Activated CD8-positive, alpha-beta T cell treated with anti-CD3 and anti-CD28 coated beads, Interleukin-2, amount 10 ng/mL, durations not matched to agents 7 days and 5 days (primary cell): ENCODE measurements at regions of chr2 and their contacts with region 1.

Region 1: GRCh38 chr2:239322416-239323086 is 78.3 kb downstream of the HDAC4 start:
- DNase-seq: peak; percentile 42
- ATAC-seq: peak; percentile 9
- H3K4me3 Mint-ChIP-seq: peak overlapping the region; percentile 27
- H3K27ac Mint-ChIP-seq: peak overlapping the region; percentile 98
- H3K4me1 Mint-ChIP-seq: peaks cover 82% of the 10 kb centered on the region
- H3K27me3 Mint-ChIP-seq: no peaks in the 10 kb centered on the region

Region 2: GRCh38 chr2:239181907-239182581 is 140.5 kb before region 1 on chr2:
- CTCF ChIA-PET with region 1: no interaction called
- POLR2A ChIA-PET with region 1: no interaction called
- DNase-seq: no peak
- ATAC-seq: no peak
- H3K4me3 Mint-ChIP-seq: no peak overlapping the region
- H3K27ac Mint-ChIP-seq: no peak overlapping the region
- H3K4me1 Mint-ChIP-seq: no peaks in the 10 kb centered on the region
- H3K27me3 Mint-ChIP-seq: no peaks in the 10 kb centered on the region

Region 3: GRCh38 chr2:239288951-239289511 is 33.5 kb before region 1 on chr2:
- CTCF ChIA-PET with region 1: interaction called, 10 read pairs
- POLR2A ChIA-PET with region 1: interaction called, 12 read pairs
- DNase-seq: peak; percentile 69
- ATAC-seq: peak; percentile 73
- H3K4me3 Mint-ChIP-seq: peak overlapping the region; percentile 77
- H3K27ac Mint-ChIP-seq: peak overlapping the region; percentile 93
- H3K4me1 Mint-ChIP-seq: peaks cover 76% of the 10 kb centered on the region
- H3K27me3 Mint-ChIP-seq: no peaks in the 10 kb centered on the region

Region 4: DNA sequence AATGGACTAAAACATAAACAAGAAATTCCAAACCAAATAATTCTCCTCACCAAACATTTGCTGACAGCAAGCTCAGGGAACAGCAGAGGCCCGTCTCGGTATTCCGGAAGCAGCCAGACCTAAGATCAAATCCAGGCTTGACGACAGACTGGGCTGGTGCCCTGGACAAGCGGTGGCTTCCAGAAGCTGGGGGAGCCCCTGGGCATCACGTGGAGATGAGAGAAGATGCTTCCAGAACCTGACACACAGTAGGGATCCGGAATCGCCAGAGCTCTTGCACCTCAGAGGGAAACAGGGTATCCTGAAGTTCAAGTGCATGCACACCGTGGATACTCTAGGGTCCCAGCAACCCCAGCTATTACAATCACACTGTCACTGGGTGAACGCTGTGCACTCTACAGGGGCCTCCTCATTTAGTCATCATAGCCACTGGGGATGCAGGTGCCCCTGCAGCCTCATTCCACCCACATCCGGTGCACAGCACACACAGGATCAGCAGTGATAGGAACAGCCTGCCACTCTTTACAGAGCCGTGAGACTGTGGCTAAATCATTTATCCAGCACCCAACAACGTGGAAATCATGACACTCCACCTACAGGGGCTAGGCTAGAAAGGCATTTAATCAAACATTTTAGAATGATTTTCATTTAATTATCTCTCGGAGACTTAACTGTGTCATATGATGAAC is 24.3 kb before region 1 on chr2:
- CTCF ChIA-PET with region 1: interaction called, 10 read pairs
- POLR2A ChIA-PET with region 1: interaction called, 13 read pairs
- DNase-seq: peak; percentile 87
- ATAC-seq: peak; percentile 91
- H3K4me3 Mint-ChIP-seq: peak overlapping the region; percentile 79
- H3K27ac Mint-ChIP-seq: peak overlapping the region; percentile 90
- H3K4me1 Mint-ChIP-seq: peaks cover 73% of the 10 kb centered on the region
- H3K27me3 Mint-ChIP-seq: no peaks in the 10 kb centered on the region

Region 5: GRCh38 chr2:239303711-239304532 is 18.6 kb before region 1 on chr2:
- CTCF ChIA-PET with region 1: interaction called, 7 read pairs
- POLR2A ChIA-PET with region 1: interaction called, 13 read pairs
- DNase-seq: no peak
- ATAC-seq: peak; percentile 40
- H3K4me3 Mint-ChIP-seq: no peak overlapping the region
- H3K27ac Mint-ChIP-seq: peak overlapping the region; percentile 66
- H3K4me1 Mint-ChIP-seq: peaks cover 38% of the 10 kb centered on the region
- H3K27me3 Mint-ChIP-seq: no peaks in the 10 kb centered on the region

Region 6: DNA sequence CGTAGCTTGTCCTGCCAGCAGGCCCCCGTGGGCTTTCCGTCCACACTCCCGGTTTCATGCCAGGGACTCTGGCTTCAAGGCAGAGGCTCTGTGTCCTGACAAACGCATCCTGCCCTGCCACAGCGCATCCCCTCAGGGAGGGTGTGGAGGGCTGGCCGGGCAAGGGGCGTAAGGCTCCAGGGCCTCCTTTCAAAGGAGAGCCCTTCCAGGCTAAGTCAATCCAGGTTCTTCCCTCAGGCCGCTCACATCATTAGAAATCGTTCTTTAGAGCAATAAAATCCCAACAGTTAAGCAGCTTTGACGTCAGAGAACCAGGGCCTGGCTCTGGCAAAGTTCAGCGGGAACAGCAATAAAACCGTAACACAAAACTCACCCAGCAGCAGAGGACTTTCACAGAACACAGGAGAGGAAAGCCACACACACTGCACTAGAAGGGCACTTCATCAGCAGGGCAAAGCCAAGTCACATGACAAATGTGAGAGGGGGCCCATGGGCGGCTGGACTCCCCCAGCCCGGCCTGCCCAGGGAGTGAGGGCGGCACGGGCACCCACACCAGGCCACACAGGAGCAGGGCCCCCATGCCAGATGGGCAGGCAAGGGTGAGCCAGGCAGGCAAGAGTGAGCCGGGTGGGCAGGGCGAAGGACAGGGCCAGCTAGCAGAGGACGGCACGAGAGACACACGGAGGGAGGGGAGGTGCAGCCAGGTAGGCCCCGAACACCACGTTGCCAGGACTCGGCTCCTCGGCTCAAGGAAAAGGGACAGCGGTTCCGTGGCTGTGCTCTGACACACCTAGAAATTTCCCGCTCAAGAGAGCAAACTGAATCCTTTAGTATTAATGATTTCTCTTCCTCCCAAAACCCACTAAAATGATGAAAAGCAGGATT is 26.3 kb after region 1 on chr2:
- CTCF ChIA-PET with region 1: no interaction called
- POLR2A ChIA-PET with region 1: no interaction called
- DNase-seq: no peak
- ATAC-seq: no peak
- H3K4me3 Mint-ChIP-seq: no peak overlapping the region
- H3K27ac Mint-ChIP-seq: no peak overlapping the region
- H3K4me1 Mint-ChIP-seq: peaks cover 6% of the 10 kb centered on the region
- H3K27me3 Mint-ChIP-seq: no peaks in the 10 kb centered on the region